PC-3 (cell line): ENCODE measurements at regions of chr10 and their contacts with region 1.

Region 1: DNA sequence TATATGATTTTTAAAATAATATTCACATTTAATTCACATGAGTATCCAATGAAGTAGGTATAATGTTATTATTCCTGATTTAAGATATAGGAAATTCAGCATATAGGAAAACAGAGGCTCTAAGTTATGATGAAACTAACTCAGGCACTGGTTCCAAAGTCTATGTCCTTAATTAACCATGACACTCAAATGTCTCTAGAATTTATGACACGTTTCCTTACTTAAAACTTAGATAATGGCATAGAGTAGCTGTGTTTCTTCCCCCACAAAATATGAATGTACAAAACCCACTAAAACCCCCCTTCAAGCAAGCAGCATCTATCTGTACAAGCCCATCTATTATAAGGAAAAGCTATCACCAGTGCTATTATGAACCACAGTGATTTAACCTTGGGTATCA is 72.9 kb upstream of the CDK1 start:
- DNase-seq: no peak
- ATAC-seq: no peak
- H3K4me3 ChIP-seq: no peak overlapping the region
- H3K27ac ChIP-seq: no peak overlapping the region
- H3K4me1 ChIP-seq: peaks cover 7% of the 10 kb centered on the region; the same call in 1 of the 2 replicates
- H3K27me3 ChIP-seq: no peaks in the 10 kb centered on the region
- CTCF ChIP-seq: no peak

Region 2: GRCh38 chr10:60611291-60611747 is 94.1 kb before region 1 on chr10:
- CTCF ChIA-PET with region 1: no interaction called
- POLR2A ChIA-PET with region 1: no interaction called
- intact Hi-C with region 1: no loop called
- DNase-seq: peak; percentile 99
- ATAC-seq: peak; percentile 99
- H3K4me3 ChIP-seq: peak overlapping the region; percentile 58
- H3K27ac ChIP-seq: peak overlapping the region; percentile 14; the same call in 1 of the 2 replicates
- H3K4me1 ChIP-seq: peaks cover 33% of the 10 kb centered on the region
- H3K27me3 ChIP-seq: no peaks in the 10 kb centered on the region
- CTCF ChIP-seq: no peak

Region 3: DNA sequence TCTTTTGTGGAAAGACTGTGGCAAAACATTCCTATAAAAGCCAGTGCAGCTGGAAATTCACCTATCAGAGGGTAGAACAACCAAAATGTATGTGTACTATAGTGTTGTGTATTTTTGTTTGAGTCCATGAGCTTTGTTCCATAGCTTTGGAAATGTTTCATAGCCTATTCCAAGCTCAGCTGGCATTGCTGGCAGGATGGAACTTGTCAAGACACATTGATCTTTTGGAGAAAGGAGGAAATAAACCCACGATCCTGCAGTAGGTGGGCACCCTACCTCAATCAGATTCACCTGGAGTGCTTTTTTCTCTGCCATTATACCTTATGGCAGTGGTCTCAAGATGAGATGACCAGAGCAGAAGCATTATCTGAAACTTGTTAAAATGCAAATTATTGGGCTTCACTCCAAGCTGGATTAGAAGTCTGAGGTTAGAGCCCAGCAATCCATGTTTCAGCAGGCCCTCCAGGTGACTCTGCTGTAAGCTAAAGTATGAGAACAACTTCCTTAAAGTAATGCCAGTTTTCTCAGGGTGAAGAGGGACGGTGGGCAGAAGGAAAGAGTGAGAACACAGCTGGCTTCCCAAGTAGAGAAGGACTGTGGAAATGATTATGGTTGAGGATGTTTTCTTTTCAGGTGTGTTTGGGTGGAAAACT is 42.6 kb after region 1 on chr10:
- CTCF ChIA-PET with region 1: interaction called, 12 read pairs
- POLR2A ChIA-PET with region 1: interaction called, 3 read pairs
- intact Hi-C with region 1: no loop called
- DNase-seq: no peak
- ATAC-seq: no peak
- H3K4me3 ChIP-seq: no peak overlapping the region
- H3K27ac ChIP-seq: no peak overlapping the region
- H3K4me1 ChIP-seq: no peaks in the 10 kb centered on the region
- H3K27me3 ChIP-seq: no peaks in the 10 kb centered on the region
- CTCF ChIP-seq: no peak